GM12878 (cell line): ENCODE measurements at regions of chr3 and their contacts with region 1.

Region 1: DNA sequence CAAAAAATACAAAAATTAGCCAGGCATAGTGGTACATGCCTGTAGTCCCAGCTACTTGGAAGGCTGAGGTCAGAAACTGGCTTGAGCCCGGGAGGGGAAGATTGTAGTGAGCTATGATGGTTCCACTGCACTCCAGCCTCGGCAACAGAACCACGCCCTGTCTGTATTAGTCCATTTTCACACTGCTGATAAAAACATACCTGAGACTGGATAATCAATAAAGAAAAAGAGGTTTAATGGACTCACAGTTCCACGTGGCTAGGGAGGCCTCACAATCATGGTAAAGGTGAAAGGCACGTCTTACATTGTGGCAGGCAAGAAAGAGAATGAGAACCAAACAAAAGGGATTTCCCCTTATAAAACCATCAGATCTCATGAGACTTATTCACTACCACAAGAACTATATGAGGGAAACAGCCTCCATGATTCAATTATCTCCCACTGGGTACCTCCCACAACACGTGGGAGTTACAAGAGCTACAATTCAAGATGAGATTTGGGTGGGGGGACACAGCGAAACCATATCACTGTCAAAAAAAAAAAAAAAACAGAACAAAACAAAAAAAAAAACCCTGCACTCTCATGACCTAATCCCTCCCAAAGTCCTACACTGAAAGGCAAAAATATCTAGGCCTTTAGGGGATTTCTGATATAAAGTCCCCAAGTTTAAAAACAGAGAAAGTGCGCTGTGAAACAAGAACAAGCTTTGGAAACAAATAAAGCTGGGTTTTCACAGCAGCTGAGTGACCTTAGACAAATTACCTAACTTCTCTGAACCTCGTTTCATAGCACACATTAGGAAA is 224.7 kb downstream of the IGSF11 start:
- DNase-seq: peak; percentile 71
- ATAC-seq: peak; percentile 59
- H3K4me3 ChIP-seq: peak overlapping the region; percentile 69
- H3K27ac ChIP-seq: peak overlapping the region; percentile 72
- H3K4me1 ChIP-seq: peaks cover 10% of the 10 kb centered on the region; the same call in 1 of the 2 replicates
- H3K27me3 ChIP-seq: no peaks in the 10 kb centered on the region
- CTCF ChIP-seq: no peak
- EP300 ChIP-seq: peak in 1 of 2 experiments; percentile 28; a peak in 2 of 4 replicates
- POLR2A ChIP-seq: 0 out of 2 replicates have a peak, but pooled peaks have one; percentile 29
- RAD21 ChIP-seq: no peak

Region 2: DNA sequence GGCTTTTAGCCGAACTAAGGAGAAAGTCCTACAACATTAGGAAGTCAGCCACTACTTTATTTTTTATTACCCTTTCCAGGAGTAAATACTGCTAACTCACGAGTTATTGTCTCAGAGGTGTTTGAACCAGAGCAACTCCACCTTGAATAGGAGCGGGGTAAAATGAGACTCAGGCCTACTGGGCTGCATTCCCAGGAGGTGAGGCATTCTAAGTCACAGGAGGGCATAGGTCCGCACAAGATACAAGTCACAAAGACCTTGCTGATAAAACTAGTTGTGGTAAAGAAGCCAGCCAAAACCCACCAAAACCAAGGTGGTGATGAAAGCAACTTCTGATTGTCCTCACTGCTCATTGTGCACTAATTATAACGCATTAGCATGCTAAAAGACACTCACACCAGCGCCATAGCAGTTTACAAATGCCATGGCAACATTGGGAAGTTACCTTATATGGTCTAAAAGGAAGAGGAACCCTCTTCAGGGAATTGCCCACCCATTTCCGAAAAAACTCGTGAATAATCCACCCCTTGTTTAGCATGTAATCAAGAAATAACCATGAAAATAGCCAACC is 331.1 kb before region 1 on chr3:
- CTCF ChIA-PET with region 1: no interaction called
- POLR2A ChIA-PET with region 1: interaction called, 4 read pairs
- RAD21 ChIA-PET with region 1: interaction called, 3 read pairs
- SMC1A ChIA-PET with region 1: no interaction called
- in situ Hi-C with region 1: no loop called
- intact Hi-C with region 1: loop called (anchors 5 kb)
- DNase-seq: no peak
- ATAC-seq: peak; percentile 10
- H3K4me3 ChIP-seq: no peak overlapping the region
- H3K27ac ChIP-seq: no peak overlapping the region; the same call in 1 of the 2 replicates
- H3K4me1 ChIP-seq: peaks cover 7% of the 10 kb centered on the region
- H3K27me3 ChIP-seq: no peaks in the 10 kb centered on the region
- CTCF ChIP-seq: no peak
- EP300 ChIP-seq: no peak
- POLR2A ChIP-seq: no peak
- RAD21 ChIP-seq: no peak

Region 3: GRCh38 chr3:118760585-118761290 is 49.2 kb before region 1 on chr3:
- CTCF ChIA-PET with region 1: interaction called, 120 read pairs
- POLR2A ChIA-PET with region 1: interaction called, 7 read pairs
- RAD21 ChIA-PET with region 1: interaction called, 88 read pairs
- SMC1A ChIA-PET with region 1: interaction called, 42 read pairs
- in situ Hi-C with region 1: no loop called
- intact Hi-C with region 1: no loop called
- DNase-seq: no peak
- ATAC-seq: peak; percentile 84
- H3K4me3 ChIP-seq: no peak overlapping the region
- H3K27ac ChIP-seq: no peak overlapping the region
- H3K4me1 ChIP-seq: no peaks in the 10 kb centered on the region
- H3K27me3 ChIP-seq: no peaks in the 10 kb centered on the region
- CTCF ChIP-seq: peak in 2 of 3 experiments; percentile 35 to 58; a peak in 3 of 6 replicates
- EP300 ChIP-seq: no peak
- POLR2A ChIP-seq: no peak
- RAD21 ChIP-seq: peak; percentile 44; the same call in 1 of the 2 replicates

Region 4: DNA sequence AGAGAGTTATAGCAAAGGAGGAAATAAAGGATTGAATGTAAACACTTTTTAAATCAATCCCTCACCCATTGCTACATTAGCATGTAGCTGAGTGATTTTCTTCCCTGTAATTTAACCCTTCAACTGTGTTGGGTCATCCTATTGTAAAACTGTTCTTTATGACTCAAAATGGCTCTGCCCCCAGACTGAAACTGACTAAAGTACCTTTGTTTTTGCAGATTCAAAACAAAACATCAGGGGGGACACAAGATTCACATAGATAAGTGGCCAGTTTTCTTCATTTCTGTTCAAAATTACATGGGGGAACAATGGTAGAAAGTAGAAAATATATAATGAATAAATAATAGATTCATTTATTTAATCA is 43.6 kb before region 1 on chr3:
- CTCF ChIA-PET with region 1: interaction called, 120 read pairs
- POLR2A ChIA-PET with region 1: interaction called, 7 read pairs
- RAD21 ChIA-PET with region 1: interaction called, 88 read pairs
- SMC1A ChIA-PET with region 1: interaction called, 42 read pairs
- in situ Hi-C with region 1: no loop called
- intact Hi-C with region 1: loop called (anchors 5 kb)
- DNase-seq: no peak
- ATAC-seq: peak; percentile 76
- H3K4me3 ChIP-seq: no peak overlapping the region
- H3K27ac ChIP-seq: no peak overlapping the region
- H3K4me1 ChIP-seq: no peaks in the 10 kb centered on the region
- H3K27me3 ChIP-seq: no peaks in the 10 kb centered on the region
- CTCF ChIP-seq: no peak
- EP300 ChIP-seq: no peak
- POLR2A ChIP-seq: no peak
- RAD21 ChIP-seq: no peak

Region 5: DNA sequence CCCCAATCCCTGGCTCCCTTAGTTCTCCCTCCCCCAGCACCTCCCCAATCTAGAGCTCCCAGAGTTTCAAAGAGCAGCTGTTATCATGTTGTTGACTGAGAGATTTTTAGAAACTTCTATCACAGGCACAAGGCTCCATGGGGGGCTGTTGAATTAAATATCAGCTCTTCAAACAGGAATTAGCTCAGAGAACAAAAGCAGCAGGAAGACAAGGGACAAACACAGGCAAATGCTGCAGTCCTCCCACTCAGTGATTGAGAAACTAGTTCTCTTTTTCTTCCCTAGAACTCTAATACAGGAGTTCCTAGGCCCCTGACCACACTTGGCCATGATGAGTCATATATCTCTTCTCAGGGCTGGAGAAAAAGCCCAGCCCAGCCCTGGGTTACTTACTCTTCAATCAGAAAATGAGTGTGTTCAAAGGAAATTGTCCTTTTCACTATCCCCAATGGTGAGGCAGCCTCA is 37.3 kb before region 1 on chr3:
- CTCF ChIA-PET with region 1: interaction called, 120 read pairs
- POLR2A ChIA-PET with region 1: interaction called, 5 read pairs
- RAD21 ChIA-PET with region 1: interaction called, 19 read pairs
- SMC1A ChIA-PET with region 1: interaction called, 394 read pairs
- in situ Hi-C with region 1: no loop called
- intact Hi-C with region 1: loop called (anchors 5 kb)
- DNase-seq: peak; percentile 64
- ATAC-seq: peak; percentile 96
- H3K4me3 ChIP-seq: no peak overlapping the region
- H3K27ac ChIP-seq: peak overlapping the region; percentile 34; the same call in 1 of the 2 replicates
- H3K4me1 ChIP-seq: peaks cover 4% of the 10 kb centered on the region
- H3K27me3 ChIP-seq: no peaks in the 10 kb centered on the region
- CTCF ChIP-seq: no peak
- EP300 ChIP-seq: peak in 1 of 2 experiments; percentile 29; a peak in 1 of 4 replicates
- POLR2A ChIP-seq: no peak
- RAD21 ChIP-seq: no peak

Region 6: DNA sequence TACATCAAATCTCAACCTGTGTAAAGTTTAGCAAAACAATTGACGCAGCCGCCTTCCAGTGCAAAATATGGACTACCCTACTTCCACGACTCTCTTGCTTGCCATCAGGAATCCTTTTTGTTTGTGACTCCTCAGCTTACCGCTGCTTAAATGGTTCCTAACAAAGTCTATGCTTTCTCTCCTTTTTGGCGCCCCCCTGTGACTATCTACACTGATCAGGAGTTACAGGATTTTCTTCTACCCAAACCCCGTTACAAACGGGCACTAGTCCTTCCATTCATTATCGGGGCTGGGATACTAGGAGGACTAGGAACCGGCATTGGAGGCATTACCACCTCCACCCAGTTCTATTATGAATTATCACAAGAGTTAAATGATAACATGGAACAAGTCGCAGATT is 40.8 kb after region 1 on chr3:
- CTCF ChIA-PET with region 1: no interaction called
- POLR2A ChIA-PET with region 1: no interaction called
- RAD21 ChIA-PET with region 1: no interaction called
- SMC1A ChIA-PET with region 1: no interaction called
- in situ Hi-C with region 1: no loop called
- intact Hi-C with region 1: no loop called
- DNase-seq: no peak
- ATAC-seq: no peak
- H3K4me3 ChIP-seq: no peak overlapping the region
- H3K27ac ChIP-seq: no peak overlapping the region
- H3K4me1 ChIP-seq: peaks cover 3% of the 10 kb centered on the region
- H3K27me3 ChIP-seq: no peaks in the 10 kb centered on the region
- CTCF ChIP-seq: no peak
- EP300 ChIP-seq: no peak
- POLR2A ChIP-seq: no peak
- RAD21 ChIP-seq: no peak